ENCODE measurements at regions of chr9 and their contacts with region 1.

Region 1: GRCh38 chr9:17191082-17191481 is 56.2 kb downstream of the CNTLN start:
- DNase-seq: no peak
- H3K4me3 Mint-ChIP-seq: no peak overlapping the region
- H3K27ac Mint-ChIP-seq: no peak overlapping the region
- H3K4me1 Mint-ChIP-seq: no peaks in the 10 kb centered on the region
- H3K27me3 Mint-ChIP-seq: no peaks in the 10 kb centered on the region
- CTCF ChIP-seq: no peak

Region 2: GRCh38 chr9:16960084-16960483 is 231.0 kb before region 1 on chr9:
- CTCF ChIA-PET with region 1: no interaction called
- intact Hi-C with region 1: no loop called
- DNase-seq: no peak
- H3K4me3 Mint-ChIP-seq: no peak overlapping the region
- H3K27ac Mint-ChIP-seq: no peak overlapping the region
- H3K4me1 Mint-ChIP-seq: no peaks in the 10 kb centered on the region
- H3K27me3 Mint-ChIP-seq: no peaks in the 10 kb centered on the region
- CTCF ChIP-seq: no peak

Region 3: GRCh38 chr9:17870722-17871121 is 679.6 kb after region 1 on chr9:
- CTCF ChIA-PET with region 1: no interaction called
- intact Hi-C with region 1: loop called (anchors 5 kb)
- DNase-seq: no peak
- H3K4me3 Mint-ChIP-seq: no peak overlapping the region
- H3K27ac Mint-ChIP-seq: no peak overlapping the region
- H3K4me1 Mint-ChIP-seq: no peaks in the 10 kb centered on the region
- H3K27me3 Mint-ChIP-seq: no peaks in the 10 kb centered on the region
- CTCF ChIP-seq: no peak